Breast epithelium (tissue), 4 donors: ENCODE measurements at regions of chr1 and their contacts with region 1.

Region 1: GRCh38 chr1:246497331-246497915 is 9.7 kb downstream of the SMYD3 start:
- DNase-seq: no peak
- H3K4me3 ChIP-seq: no peak overlapping the region
- H3K27ac ChIP-seq: no peak overlapping the region
- H3K4me1 ChIP-seq: no peaks in the 10 kb centered on the region
- H3K27me3 ChIP-seq: no peaks in the 10 kb centered on the region
- CTCF ChIP-seq: peak; percentile 62 to 79 (median 77)
- POLR2A ChIP-seq: no peak

Region 2: GRCh38 chr1:247037483-247038320 is 540.3 kb after region 1 on chr1:
- intact Hi-C with region 1: loop called (anchors 10 kb)
- DNase-seq: no peak
- H3K4me3 ChIP-seq: no peak overlapping the region
- H3K27ac ChIP-seq: no peak overlapping the region
- H3K4me1 ChIP-seq: no peaks in the 10 kb centered on the region
- H3K27me3 ChIP-seq: no peaks in the 10 kb centered on the region
- CTCF ChIP-seq: no peak
- POLR2A ChIP-seq: no peak